Dendritic cell treated with granulocyte-macrophage colony-stimulating factor and Interleukin-4, amounts not matched to agents 40 ng/mL and 50 ng/mL, for 4 days (primary cell): ENCODE measurements at regions of chr9 and their contacts with region 1.

Region 1: DNA sequence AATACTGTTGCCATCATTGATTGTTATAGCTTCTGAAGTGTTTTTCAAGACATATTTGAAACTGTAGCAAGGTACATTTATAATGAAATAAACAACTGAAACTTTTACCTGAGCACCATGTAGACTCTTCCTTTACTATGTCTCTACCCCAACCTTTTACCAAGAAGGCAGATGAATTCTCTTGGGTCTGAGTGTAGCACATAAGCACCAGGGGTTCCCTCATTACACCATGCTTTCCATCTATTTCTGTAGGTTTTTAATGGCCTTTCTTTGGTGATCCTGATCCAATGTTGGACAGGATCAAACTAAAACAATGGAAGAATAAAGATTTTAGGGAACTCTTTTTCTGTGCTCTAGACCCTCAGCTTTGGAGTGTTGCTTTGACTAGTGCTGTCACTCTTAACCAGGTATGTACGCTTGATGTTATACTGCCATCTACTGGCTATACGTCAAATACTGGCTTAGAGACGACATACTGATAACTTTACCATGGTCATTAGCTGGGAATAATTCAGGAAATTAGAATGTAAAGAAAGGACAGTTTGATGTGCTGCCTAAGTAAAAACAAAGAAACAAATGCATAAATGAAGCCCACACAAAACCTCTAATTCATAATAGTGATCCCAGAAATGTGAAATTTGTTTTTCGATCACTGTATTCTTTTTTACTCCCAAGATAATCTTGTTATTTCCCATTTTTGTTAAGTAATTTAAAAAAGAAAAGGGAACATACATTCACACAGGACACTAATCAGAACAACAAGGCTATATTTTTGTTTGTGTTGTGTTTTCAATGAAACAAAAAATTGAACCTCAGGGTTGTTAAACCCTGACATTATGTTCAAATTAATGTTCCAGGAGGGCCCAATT is 30.7 kb downstream of the IFNW1 start:
- H3K4me3 Mint-ChIP-seq: no peak overlapping the region
- H3K27ac Mint-ChIP-seq: no peak overlapping the region
- H3K4me1 Mint-ChIP-seq: no peaks in the 10 kb centered on the region
- H3K27me3 Mint-ChIP-seq: no peaks in the 10 kb centered on the region

Region 2: GRCh38 chr9:19925817-19926503 is 1185.0 kb before region 1 on chr9:
- intact Hi-C with region 1: loop called (anchors 1 kb)
- H3K4me3 Mint-ChIP-seq: peak overlapping the region; percentile 55
- H3K27ac Mint-ChIP-seq: peak overlapping the region; percentile 50
- H3K4me1 Mint-ChIP-seq: peaks cover 22% of the 10 kb centered on the region
- H3K27me3 Mint-ChIP-seq: peaks cover 16% of the 10 kb centered on the region

Region 3: DNA sequence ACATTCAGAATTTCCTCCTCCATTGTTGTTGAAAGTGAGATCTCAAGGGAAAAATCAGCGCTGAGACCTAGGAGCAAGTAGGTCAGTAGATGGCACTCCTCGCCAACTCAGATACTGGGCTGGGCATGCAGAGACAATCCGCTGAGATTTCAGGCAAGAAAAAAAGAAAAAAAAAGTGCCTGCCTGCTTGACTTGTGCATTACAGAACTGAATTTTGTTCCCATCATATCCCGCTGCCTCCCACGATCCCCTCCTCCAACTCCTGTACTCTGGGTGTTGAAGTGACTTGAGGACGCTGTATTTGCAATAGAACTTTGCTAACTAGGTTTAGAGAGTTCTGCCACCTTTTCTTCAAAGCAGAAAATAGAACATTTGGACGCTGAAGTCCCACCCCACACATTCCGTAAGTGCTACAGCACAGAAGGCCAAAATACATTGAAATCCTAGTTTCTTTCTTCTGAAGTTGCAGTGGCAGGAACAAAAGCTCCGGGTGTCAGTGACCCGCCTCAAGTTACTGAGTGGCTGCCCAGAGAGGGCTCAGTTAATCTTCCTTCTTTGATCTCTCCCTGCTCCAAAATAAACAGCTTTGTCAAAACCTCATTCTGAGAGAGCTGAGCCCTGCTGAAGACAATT is 754.4 kb before region 1 on chr9:
- intact Hi-C with region 1: loop called (anchors 5 kb)
- H3K4me3 Mint-ChIP-seq: no peak overlapping the region
- H3K27ac Mint-ChIP-seq: no peak overlapping the region
- H3K4me1 Mint-ChIP-seq: peaks cover 4% of the 10 kb centered on the region
- H3K27me3 Mint-ChIP-seq: no peaks in the 10 kb centered on the region

Region 4: DNA sequence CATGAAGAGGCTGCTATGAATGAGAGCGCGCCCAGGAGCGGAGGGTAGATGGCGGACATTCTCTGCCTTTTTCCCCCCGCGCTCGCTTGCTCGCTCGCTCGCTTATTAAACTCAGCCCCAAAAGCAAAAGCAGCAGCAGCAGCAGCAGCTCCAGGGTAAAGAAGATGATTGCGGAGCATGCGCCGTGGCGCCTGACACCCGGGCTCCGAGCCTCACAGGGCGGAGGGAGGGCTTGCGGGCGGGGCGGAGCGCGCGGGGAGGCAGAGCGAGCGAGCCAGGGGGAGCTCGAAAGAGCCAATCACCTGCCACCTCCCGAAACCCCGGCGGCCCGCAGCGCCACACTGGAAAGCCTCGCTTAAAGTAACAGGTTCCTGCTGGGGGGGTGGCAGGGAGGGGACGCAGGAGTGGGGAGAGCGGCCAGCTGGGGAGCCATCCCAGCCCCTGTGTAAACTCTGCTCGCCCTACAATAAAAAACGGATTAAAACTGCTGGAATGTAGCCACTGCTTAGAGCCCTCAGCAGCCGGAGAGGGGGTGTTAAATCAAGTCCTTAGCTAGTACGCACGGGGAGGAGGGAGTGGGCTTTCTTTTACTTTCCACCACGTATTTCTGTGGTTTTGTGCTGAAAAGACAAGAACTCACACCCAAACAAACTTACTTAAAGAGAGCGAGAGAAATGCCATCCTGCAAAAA is 488.5 kb before region 1 on chr9 and contains the start of gene MLLT3:
- intact Hi-C with region 1: loop called (anchors 10 kb)
- H3K4me3 Mint-ChIP-seq: peak within 1 kb of the TSS; percentile 92
- H3K27ac Mint-ChIP-seq: peak within 1 kb of the TSS; percentile 80
- H3K4me1 Mint-ChIP-seq: peaks cover 47% of the 10 kb centered on the region
- H3K27me3 Mint-ChIP-seq: peaks cover 43% of the 10 kb centered on the region

Region 5: DNA sequence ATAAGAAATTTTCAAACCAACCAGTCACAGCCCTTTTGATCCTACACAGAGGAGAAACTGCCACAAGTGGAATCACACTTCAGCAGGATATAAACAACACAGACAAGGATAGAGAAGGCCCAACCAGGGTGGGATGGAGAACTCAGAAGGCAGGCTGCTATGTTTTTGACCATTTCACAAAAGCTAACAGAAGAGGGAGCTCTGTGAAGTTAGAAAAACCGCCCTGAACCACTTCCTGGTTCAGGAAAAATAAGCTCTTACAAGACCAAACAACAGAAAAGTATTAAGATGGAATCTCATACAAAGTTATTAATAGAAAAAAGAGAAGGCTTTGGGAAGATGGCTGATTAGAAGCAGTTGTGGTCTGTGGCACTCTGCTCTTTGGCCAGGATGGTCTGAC is 32.2 kb before region 1 on chr9:
- intact Hi-C with region 1: loop called (anchors 5 kb)
- H3K4me3 Mint-ChIP-seq: no peak overlapping the region
- H3K27ac Mint-ChIP-seq: no peak overlapping the region
- H3K4me1 Mint-ChIP-seq: peaks cover 21% of the 10 kb centered on the region
- H3K27me3 Mint-ChIP-seq: peaks cover 2% of the 10 kb centered on the region